Naive thymus-derived CD4-positive, alpha-beta T cell (primary cell): ENCODE measurements at regions of chr4 and their contacts with region 1.

Region 1: DNA sequence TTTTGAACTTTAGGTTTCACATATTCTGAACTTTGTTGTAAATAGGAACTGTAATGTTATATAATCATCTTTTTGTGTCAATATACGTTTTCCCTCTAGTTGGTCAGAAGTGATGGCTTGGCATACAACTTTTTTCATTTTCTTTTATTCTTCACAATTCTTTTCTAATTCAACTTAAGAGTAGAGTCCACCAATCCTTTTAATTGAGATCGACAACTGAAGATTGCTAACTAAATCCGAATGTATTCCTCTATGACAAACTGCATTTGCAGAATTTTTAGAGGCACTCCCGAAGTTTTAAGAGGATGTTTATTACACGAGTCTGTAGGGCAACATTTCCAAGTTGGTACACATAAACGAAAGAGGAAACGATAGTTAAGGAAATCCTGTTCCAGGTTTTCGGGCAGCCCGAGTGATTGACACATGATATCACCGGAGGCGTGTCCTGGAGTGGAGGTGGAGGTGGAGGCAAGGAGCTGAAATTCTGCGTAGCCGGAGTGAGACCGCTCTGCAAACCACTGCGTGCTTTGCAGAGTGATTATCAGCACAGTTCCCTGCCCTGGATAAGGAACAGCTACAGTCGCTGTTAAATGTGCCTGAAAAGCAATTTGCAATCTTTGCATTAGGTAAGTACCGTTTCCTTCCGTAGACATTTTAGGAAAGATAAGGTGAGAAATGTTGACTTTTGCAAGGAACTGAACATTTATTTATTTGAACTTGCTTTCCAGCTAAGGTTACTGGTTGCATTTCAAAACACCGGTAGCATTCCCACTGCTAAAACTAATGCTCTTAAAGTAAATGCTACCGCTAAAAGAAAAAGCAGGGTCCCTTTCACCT is at the start of gene SPRY1:
- DNase-seq: peak; percentile 22 to 81 (median 72)
- ATAC-seq: peak; percentile 72
- H3K4me3 ChIP-seq: peak within 1 kb of the TSS; percentile 69
- H3K4me3 Mint-ChIP-seq: peak within 1 kb of the TSS; percentile 81 to 92 (median 88)
- H3K27ac ChIP-seq: peak within 1 kb of the TSS; percentile 52
- H3K27ac Mint-ChIP-seq: peak within 1 kb of the TSS; percentile 13 to 91 (median 70)
- H3K4me1 ChIP-seq: peaks cover 0 to 17% of the 10 kb centered on the region in 2 donors
- H3K4me1 Mint-ChIP-seq: peaks cover 14 to 33% (median 19%) of the 10 kb centered on the region in 7 donors
- H3K27me3 ChIP-seq: no peaks in the 10 kb centered on the region
- H3K27me3 Mint-ChIP-seq: peaks cover 11 to 33% (median 17%) of the 10 kb centered on the region in 5 donors
- total RNA-seq, gene SPRY1: 2.5 to 20.5 (median 6.2) TPM

Region 2: GRCh38 chr4:121696581-121697461 is 1699.7 kb before region 1 on chr4 and contains the start of gene ANXA5:
- CTCF ChIA-PET with region 1: no interaction called
- POLR2A ChIA-PET with region 1: no interaction called
- intact Hi-C with region 1: loop called (anchors 5 kb)
- DNase-seq: peak; percentile 8 to 85 (median 41)
- ATAC-seq: peak; percentile 92
- H3K4me3 ChIP-seq: peak within 1 kb of the TSS; percentile 87
- H3K4me3 Mint-ChIP-seq: peak within 1 kb of the TSS; percentile 94 to 99 (median 97)
- H3K27ac ChIP-seq: peak within 1 kb of the TSS; percentile 39
- H3K27ac Mint-ChIP-seq: peak within 1 kb of the TSS; percentile 67 to 99 (median 87)
- H3K4me1 ChIP-seq: peaks cover 4 to 13% of the 10 kb centered on the region in 2 donors
- H3K4me1 Mint-ChIP-seq: peaks cover 12 to 43% (median 19%) of the 10 kb centered on the region in 7 donors
- H3K27me3 ChIP-seq: no peaks in the 10 kb centered on the region
- H3K27me3 Mint-ChIP-seq: peaks cover 0 to 43% (median 28%) of the 10 kb centered on the region in 5 donors
- total RNA-seq, gene ANXA5: 25.5 to 180 (median 49.5) TPM

Region 3: GRCh38 chr4:121913667-121914066 is 1482.9 kb before region 1 on chr4:
- CTCF ChIA-PET with region 1: no interaction called
- POLR2A ChIA-PET with region 1: no interaction called
- intact Hi-C with region 1: no loop called
- DNase-seq: no peak
- ATAC-seq: no peak
- H3K4me3 ChIP-seq: no peak overlapping the region
- H3K4me3 Mint-ChIP-seq: no peak overlapping the region
- H3K27ac ChIP-seq: no peak overlapping the region
- H3K27ac Mint-ChIP-seq: no peak overlapping the region
- H3K4me1 ChIP-seq: no peaks in the 10 kb centered on the region
- H3K4me1 Mint-ChIP-seq: peaks cover 0 to 6% (median 4%) of the 10 kb centered on the region in 7 donors
- H3K27me3 ChIP-seq: no peaks in the 10 kb centered on the region
- H3K27me3 Mint-ChIP-seq: peaks cover 0 to 8% (median 0%) of the 10 kb centered on the region in 5 donors

Region 4: DNA sequence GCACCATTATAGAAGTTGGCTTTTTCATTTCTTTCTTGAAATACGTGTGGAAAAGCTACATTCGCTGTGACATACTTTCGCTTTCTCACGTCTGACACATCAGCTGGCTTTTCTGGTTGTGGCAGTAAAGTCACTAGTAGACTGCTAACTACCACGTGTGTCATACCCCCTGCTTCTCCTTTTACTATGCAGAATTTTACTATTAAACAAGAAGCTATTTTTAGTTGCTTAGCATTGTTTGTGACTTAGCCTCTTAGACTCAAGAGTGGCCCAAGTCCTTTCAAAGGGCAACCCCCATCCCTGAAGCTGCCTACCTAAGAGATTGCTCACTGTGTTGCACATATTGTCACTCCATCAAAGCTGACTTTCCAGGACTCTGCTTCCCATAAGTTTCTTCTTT is 937.9 kb before region 1 on chr4:
- CTCF ChIA-PET with region 1: no interaction called
- POLR2A ChIA-PET with region 1: no interaction called
- intact Hi-C with region 1: loop called in 1 of 2 experiments (anchors 10 kb)
- DNase-seq: peak in 6 of 9 donors; percentile 19 to 41 (median 34)
- ATAC-seq: peak; percentile 76
- H3K4me3 ChIP-seq: peak overlapping the region; percentile 33
- H3K4me3 Mint-ChIP-seq: peak overlapping the region; percentile 74 to 91 (median 86)
- H3K27ac ChIP-seq: no peak overlapping the region
- H3K27ac Mint-ChIP-seq: peak overlapping the region; percentile 66 to 86 (median 77)
- H3K4me1 ChIP-seq: peaks cover 25 to 46% of the 10 kb centered on the region in 2 donors
- H3K4me1 Mint-ChIP-seq: peaks cover 20 to 55% (median 50%) of the 10 kb centered on the region in 7 donors
- H3K27me3 ChIP-seq: no peaks in the 10 kb centered on the region
- H3K27me3 Mint-ChIP-seq: no peaks in the 10 kb centered on the region

Region 5: GRCh38 chr4:123288309-123289025 is 108.1 kb before region 1 on chr4:
- CTCF ChIA-PET with region 1: no interaction called
- POLR2A ChIA-PET with region 1: no interaction called
- intact Hi-C with region 1: no loop called
- DNase-seq: no peak
- ATAC-seq: no peak
- H3K4me3 ChIP-seq: no peak overlapping the region
- H3K4me3 Mint-ChIP-seq: no peak overlapping the region
- H3K27ac ChIP-seq: no peak overlapping the region
- H3K27ac Mint-ChIP-seq: no peak overlapping the region
- H3K4me1 ChIP-seq: no peaks in the 10 kb centered on the region
- H3K4me1 Mint-ChIP-seq: peaks cover 0 to 16% (median 0%) of the 10 kb centered on the region in 7 donors
- H3K27me3 ChIP-seq: no peaks in the 10 kb centered on the region
- H3K27me3 Mint-ChIP-seq: no peaks in the 10 kb centered on the region

Region 6: DNA sequence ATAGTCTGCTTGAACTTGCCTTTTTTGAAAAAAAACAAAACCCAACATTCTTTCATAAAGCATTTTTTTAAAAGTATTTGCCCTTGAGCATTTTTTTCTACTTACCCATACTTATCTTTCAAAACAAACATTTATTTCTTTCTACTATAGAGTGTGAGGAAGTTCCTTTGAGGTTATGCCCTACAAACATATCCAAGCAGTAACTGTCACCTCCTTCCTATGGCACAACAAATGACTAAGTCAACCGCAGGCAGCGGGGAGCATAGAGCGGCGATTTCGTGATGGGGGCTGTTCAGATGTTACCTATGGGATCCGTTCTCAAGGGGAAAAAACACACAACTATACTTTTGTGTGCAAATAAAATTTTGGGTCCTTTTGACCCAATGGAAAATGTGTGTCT is 19.5 kb after region 1 on chr4:
- CTCF ChIA-PET with region 1: no interaction called
- POLR2A ChIA-PET with region 1: no interaction called
- intact Hi-C with region 1: loop called in 1 of 2 experiments (anchors 1 kb)
- DNase-seq: peak in 1 of 9 donors; percentile 61
- ATAC-seq: peak; percentile 90
- H3K4me3 ChIP-seq: no peak overlapping the region
- H3K4me3 Mint-ChIP-seq: peak overlapping the region in 1 of 10 donors; percentile 59
- H3K27ac ChIP-seq: no peak overlapping the region
- H3K27ac Mint-ChIP-seq: peak overlapping the region in 1 of 9 donors; percentile 80
- H3K4me1 ChIP-seq: no peaks in the 10 kb centered on the region
- H3K4me1 Mint-ChIP-seq: peaks cover 0 to 74% (median 8%) of the 10 kb centered on the region in 7 donors
- H3K27me3 ChIP-seq: no peaks in the 10 kb centered on the region
- H3K27me3 Mint-ChIP-seq: peaks cover 0 to 12% (median 0%) of the 10 kb centered on the region in 5 donors

Region 7: GRCh38 chr4:123477711-123478209 is 81.2 kb after region 1 on chr4:
- CTCF ChIA-PET with region 1: no interaction called
- POLR2A ChIA-PET with region 1: no interaction called
- intact Hi-C with region 1: loop called in 1 of 2 experiments (anchors 1 kb)
- DNase-seq: peak in 8 of 9 donors; percentile 10 to 52 (median 32)
- ATAC-seq: peak; percentile 88
- H3K4me3 ChIP-seq: no peak overlapping the region
- H3K4me3 Mint-ChIP-seq: peak overlapping the region in 1 of 10 donors; percentile 71
- H3K27ac ChIP-seq: no peak overlapping the region
- H3K27ac Mint-ChIP-seq: peak overlapping the region in 2 of 9 donors; percentile 48 to 76
- H3K4me1 ChIP-seq: peaks cover 0 to 5% of the 10 kb centered on the region in 2 donors
- H3K4me1 Mint-ChIP-seq: peaks cover 7 to 39% (median 17%) of the 10 kb centered on the region in 7 donors
- H3K27me3 ChIP-seq: no peaks in the 10 kb centered on the region
- H3K27me3 Mint-ChIP-seq: peaks cover 0 to 10% (median 0%) of the 10 kb centered on the region in 5 donors

Region 8: GRCh38 chr4:123599920-123600810 is 203.6 kb after region 1 on chr4:
- CTCF ChIA-PET with region 1: no interaction called
- POLR2A ChIA-PET with region 1: no interaction called
- intact Hi-C with region 1: loop called in 1 of 2 experiments (anchors 1 kb)
- DNase-seq: peak in 8 of 9 donors; percentile 16 to 66 (median 36)
- ATAC-seq: peak; percentile 95
- H3K4me3 ChIP-seq: no peak overlapping the region
- H3K4me3 Mint-ChIP-seq: peak overlapping the region; percentile 17 to 83 (median 52)
- H3K27ac ChIP-seq: no peak overlapping the region
- H3K27ac Mint-ChIP-seq: peak overlapping the region; percentile 4 to 94 (median 70)
- H3K4me1 ChIP-seq: peaks cover 6 to 14% of the 10 kb centered on the region in 2 donors
- H3K4me1 Mint-ChIP-seq: peaks cover 10 to 50% (median 28%) of the 10 kb centered on the region in 7 donors
- H3K27me3 ChIP-seq: no peaks in the 10 kb centered on the region
- H3K27me3 Mint-ChIP-seq: peaks cover 0 to 4% (median 0%) of the 10 kb centered on the region in 5 donors

Region 9: DNA sequence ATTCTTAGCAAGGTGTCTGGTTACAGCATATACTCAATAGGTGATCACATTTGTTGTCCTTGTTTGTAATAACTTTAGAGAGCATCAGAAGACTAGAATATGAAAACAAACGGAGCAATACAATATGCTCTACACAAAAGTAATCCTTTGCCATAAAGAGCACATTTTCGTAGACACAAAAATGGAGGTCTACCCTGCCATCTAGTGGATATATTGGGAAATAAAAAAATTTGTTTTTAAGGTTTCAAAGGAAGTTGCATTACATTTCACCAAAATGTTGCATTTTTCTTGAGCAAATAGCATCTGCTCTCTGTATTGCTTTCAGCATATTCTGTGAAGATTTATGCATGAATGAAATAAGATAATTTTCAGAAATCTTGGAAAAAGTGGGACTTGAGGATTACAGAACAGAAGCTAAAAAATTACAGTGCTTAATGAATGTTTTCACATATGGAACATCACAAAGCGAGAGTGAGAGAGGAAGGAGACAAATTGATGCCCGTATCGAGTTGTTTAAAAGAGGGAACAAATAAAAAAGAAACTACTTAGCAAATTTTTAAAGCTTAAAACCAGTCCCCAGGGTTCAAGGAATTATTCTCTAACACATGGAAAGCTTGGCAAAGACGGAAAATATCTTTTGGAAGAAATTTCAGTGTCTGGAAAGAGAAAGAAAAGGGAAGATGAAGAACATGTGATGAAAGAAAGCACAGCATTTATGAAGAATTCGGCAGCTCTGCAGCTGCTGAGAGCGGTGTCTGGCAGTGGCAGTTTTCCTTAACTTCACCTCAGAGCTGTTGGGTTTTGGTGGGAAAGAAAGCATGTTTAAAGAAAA is 925.9 kb after region 1 on chr4:
- CTCF ChIA-PET with region 1: interaction called, 4 read pairs
- POLR2A ChIA-PET with region 1: no interaction called
- intact Hi-C with region 1: loop called (anchors 1 to 10 kb)
- DNase-seq: peak in 4 of 9 donors; percentile 6 to 22 (median 12)
- ATAC-seq: no peak
- H3K4me3 ChIP-seq: no peak overlapping the region
- H3K4me3 Mint-ChIP-seq: no peak overlapping the region
- H3K27ac ChIP-seq: no peak overlapping the region
- H3K27ac Mint-ChIP-seq: no peak overlapping the region
- H3K4me1 ChIP-seq: no peaks in the 10 kb centered on the region
- H3K4me1 Mint-ChIP-seq: no peaks in the 10 kb centered on the region
- H3K27me3 ChIP-seq: no peaks in the 10 kb centered on the region
- H3K27me3 Mint-ChIP-seq: peaks cover 0 to 3% (median 0%) of the 10 kb centered on the region in 5 donors